ENCODE measurements at regions of chr1 and their contacts with region 1.

Region 1: GRCh38 chr1:53014791-53015507 is 47.1 kb upstream of the PODN start:
- DNase-seq: peak; percentile 85
- H3K4me3 ChIP-seq: peak overlapping the region; percentile 22 to 83 (median 46)
- H3K27ac ChIP-seq: peak overlapping the region; percentile 53 to 82 (median 72)
- H3K4me1 ChIP-seq: peaks cover 7 to 32% (median 13%) of the 10 kb centered on the region in 4 donors
- H3K27me3 ChIP-seq: no peaks in the 10 kb centered on the region
- CTCF ChIP-seq: no peak
- EP300 ChIP-seq: no peak
- POLR2A ChIP-seq: peak; percentile 52

Region 2: GRCh38 chr1:52552505-52553361 is 462.2 kb before region 1 on chr1 and contains the start of gene TUT4:
- in situ Hi-C with region 1: no loop called
- intact Hi-C with region 1: no loop called
- DNase-seq: peak; percentile 72
- H3K4me3 ChIP-seq: peak within 1 kb of the TSS; percentile 77 to 95 (median 86)
- H3K27ac ChIP-seq: peak within 1 kb of the TSS; percentile 88 to 95 (median 94)
- H3K4me1 ChIP-seq: peaks cover 0 to 31% (median 17%) of the 10 kb centered on the region in 4 donors
- H3K27me3 ChIP-seq: no peaks in the 10 kb centered on the region
- CTCF ChIP-seq: peak in 1 of 5 experiments; percentile 15
- EP300 ChIP-seq: no peak
- POLR2A ChIP-seq: peak; percentile 54
- total RNA-seq, gene TUT4: 12.3 to 55.3 (median 27.4) TPM

Region 3: GRCh38 chr1:53061859-53062707 is 47.1 kb after region 1 on chr1 and contains the start of gene PODN:
- in situ Hi-C with region 1: no loop called
- intact Hi-C with region 1: loop called (anchors 10 kb)
- DNase-seq: no peak
- H3K4me3 ChIP-seq: peak within 1 kb of the TSS; percentile 49 to 65 (median 58)
- H3K27ac ChIP-seq: peak within 1 kb of the TSS; percentile 60 to 78 (median 70)
- H3K4me1 ChIP-seq: peaks cover 3 to 19% (median 12%) of the 10 kb centered on the region in 4 donors
- H3K27me3 ChIP-seq: peaks cover 41% of the 10 kb centered on the region
- CTCF ChIP-seq: no peak
- EP300 ChIP-seq: no peak
- POLR2A ChIP-seq: no peak
- total RNA-seq, gene PODN: 29.4 to 43.6 (median 35.6) TPM